Caco-2 (cell line): ENCODE measurements at regions of chr2 and their contacts with region 1.

Region 1: DNA sequence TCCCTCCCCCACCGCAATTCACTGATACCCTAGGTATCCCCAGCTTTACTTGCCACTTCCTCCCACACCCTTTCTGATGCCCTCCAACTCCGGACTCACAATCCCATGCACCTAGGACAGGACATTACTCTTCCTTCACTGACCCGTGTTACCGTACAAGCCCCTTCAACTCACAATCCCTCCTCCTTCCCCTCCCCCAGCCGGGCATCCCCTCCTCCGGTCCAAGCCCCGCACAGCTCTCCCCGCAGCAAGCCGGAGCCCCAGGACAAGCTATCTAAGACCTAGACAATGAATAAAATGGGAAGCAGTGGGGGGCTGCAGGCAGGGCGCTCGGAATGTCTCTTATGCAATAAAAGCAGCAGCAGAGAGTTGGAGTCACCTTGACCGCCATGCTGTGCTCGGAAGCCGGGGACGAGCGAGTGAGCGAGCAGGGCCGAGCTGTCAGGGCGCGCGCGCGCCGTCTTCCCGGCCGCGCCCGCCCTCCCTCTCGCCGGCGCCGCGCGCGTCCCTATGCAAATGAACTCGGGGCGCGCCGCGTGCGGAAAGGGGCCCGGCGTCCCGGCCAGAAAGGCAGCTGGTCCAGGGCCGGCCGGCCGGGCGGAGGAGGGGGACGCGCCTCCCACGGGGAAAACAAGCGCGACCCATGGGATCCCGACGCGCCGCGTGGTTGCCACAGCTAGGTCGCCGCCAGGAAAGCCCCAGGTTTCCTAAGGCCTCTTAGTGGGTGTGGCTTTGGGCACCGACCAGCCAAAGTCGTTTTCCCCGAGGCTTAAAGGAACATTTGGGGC is at the start of gene SLC25A12:
- DNase-seq: peak; percentile 74 to 86
- H3K4me3 ChIP-seq: peak within 1 kb of the TSS; percentile 60
- H3K4me3 Mint-ChIP-seq: peak within 1 kb of the TSS; percentile 86
- H3K27ac Mint-ChIP-seq: no peak within 1 kb of the TSS
- H3K4me1 ChIP-seq: peaks cover 8% of the 10 kb centered on the region
- H3K4me1 Mint-ChIP-seq: peaks cover 14% of the 10 kb centered on the region
- H3K27me3 ChIP-seq: no peaks in the 10 kb centered on the region
- H3K27me3 Mint-ChIP-seq: peaks cover 6% of the 10 kb centered on the region
- CTCF ChIP-seq: no peak
- total RNA-seq, gene SLC25A12: 5.0 and 5.3 TPM in 2 replicates

Region 2: DNA sequence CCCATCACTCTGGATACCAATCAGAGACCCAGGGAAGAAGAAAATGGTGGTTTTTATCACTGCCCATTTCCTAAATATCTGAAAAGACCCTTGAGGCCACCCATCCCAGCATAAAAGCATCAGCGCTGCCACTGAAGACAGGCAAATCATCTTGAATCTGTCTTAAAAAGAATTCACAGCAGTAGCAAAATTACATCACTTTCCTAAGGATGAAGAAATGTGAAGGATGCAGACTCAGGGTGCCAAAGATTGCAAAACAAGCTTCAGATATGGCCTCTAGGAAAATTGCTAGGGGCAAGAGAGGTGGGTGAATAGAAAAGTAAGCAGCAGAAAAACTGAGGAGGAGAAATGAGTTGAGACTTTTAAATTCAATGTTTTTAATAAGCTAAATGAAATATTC is 69.9 kb before region 1 on chr2:
- CTCF ChIA-PET with region 1: no interaction called
- POLR2A ChIA-PET with region 1: no interaction called
- intact Hi-C with region 1: no loop called
- DNase-seq: no peak
- H3K4me3 ChIP-seq: no peak overlapping the region
- H3K4me3 Mint-ChIP-seq: no peak overlapping the region
- H3K27ac Mint-ChIP-seq: no peak overlapping the region
- H3K4me1 ChIP-seq: no peaks in the 10 kb centered on the region
- H3K4me1 Mint-ChIP-seq: no peaks in the 10 kb centered on the region
- H3K27me3 ChIP-seq: no peaks in the 10 kb centered on the region
- H3K27me3 Mint-ChIP-seq: no peaks in the 10 kb centered on the region
- CTCF ChIP-seq: no peak

Region 3: DNA sequence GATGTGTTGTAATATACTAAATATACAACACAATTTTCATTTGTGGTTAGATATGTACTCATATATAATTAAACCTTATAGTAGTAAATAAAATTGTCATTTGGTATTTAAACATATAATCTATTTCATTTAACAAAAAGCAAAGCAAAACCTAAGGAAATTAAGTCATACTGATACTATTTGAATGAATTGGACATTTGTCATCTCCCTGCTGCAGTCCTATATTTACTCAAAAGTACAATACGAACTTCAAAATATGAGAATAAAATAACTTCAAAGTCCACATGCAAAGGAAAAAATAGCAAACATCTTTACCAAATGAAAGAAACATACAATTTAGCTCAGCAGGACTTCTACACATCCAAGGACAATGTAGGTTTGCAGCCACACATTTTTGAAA is 16.5 kb after region 1 on chr2:
- CTCF ChIA-PET with region 1: no interaction called
- POLR2A ChIA-PET with region 1: no interaction called
- intact Hi-C with region 1: no loop called
- DNase-seq: no peak
- H3K4me3 ChIP-seq: no peak overlapping the region
- H3K4me3 Mint-ChIP-seq: no peak overlapping the region
- H3K27ac Mint-ChIP-seq: no peak overlapping the region
- H3K4me1 ChIP-seq: no peaks in the 10 kb centered on the region
- H3K4me1 Mint-ChIP-seq: no peaks in the 10 kb centered on the region
- H3K27me3 ChIP-seq: no peaks in the 10 kb centered on the region
- H3K27me3 Mint-ChIP-seq: peaks cover 2% of the 10 kb centered on the region
- CTCF ChIP-seq: no peak

Region 4: DNA sequence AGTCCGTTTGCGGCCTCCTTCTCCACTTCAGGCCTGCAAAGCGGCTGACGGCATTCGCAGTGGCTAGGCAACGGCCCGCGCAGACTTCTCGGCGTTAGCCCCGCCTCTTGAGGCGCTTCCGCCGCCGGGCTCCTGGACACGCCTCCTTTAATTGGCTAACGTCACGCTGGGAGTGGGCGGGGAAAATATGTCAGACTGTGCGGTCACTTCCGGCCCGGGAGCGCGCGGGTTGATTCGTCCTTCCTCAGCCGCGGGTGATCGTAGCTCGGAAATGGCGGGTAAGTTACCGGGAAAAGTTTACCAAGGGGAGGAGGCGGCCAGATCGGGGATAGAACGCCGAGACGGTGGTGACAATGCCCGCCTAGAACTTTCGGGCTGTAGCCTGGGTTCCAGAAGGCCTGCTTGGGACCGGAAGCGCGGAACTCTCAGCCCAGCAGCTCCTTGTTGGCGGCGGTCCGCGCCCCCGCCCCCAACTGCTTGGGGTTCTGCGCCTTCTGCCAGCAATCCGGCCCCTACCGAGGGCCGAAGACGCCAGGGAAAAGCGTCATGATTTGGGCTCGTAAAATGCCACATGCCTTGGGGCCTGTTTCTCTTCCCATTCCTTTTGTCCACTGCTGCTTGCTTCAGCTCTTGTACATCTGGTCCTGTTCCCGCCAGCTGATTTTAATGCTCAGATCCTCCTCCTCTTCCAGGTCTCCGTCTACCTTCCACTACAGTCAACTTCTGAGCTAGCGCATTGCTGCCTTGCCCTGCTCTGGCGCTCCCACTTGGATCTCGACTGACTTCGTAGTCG is 28.4 kb after region 1 on chr2 and contains the start of gene HAT1:
- CTCF ChIA-PET with region 1: interaction called, 6 read pairs
- POLR2A ChIA-PET with region 1: interaction called, 11 read pairs
- intact Hi-C with region 1: loop called (anchors 1 kb)
- DNase-seq: peak; percentile 97 to 98
- H3K4me3 ChIP-seq: peak within 1 kb of the TSS; percentile 81
- H3K4me3 Mint-ChIP-seq: peak within 1 kb of the TSS; percentile 98
- H3K27ac Mint-ChIP-seq: peak within 1 kb of the TSS; percentile 97
- H3K4me1 ChIP-seq: peaks cover 18% of the 10 kb centered on the region
- H3K4me1 Mint-ChIP-seq: peaks cover 9% of the 10 kb centered on the region
- H3K27me3 ChIP-seq: no peaks in the 10 kb centered on the region
- H3K27me3 Mint-ChIP-seq: no peaks in the 10 kb centered on the region
- CTCF ChIP-seq: no peak
- total RNA-seq, gene HAT1: 72.0 and 74.3 TPM in 2 replicates